Activated naive CD4-positive, alpha-beta T cell treated with anti-CD3 and anti-CD28 coated beads for 36 hours (primary cell): ENCODE measurements at regions of chr19 and their contacts with region 1.

Region 1: DNA sequence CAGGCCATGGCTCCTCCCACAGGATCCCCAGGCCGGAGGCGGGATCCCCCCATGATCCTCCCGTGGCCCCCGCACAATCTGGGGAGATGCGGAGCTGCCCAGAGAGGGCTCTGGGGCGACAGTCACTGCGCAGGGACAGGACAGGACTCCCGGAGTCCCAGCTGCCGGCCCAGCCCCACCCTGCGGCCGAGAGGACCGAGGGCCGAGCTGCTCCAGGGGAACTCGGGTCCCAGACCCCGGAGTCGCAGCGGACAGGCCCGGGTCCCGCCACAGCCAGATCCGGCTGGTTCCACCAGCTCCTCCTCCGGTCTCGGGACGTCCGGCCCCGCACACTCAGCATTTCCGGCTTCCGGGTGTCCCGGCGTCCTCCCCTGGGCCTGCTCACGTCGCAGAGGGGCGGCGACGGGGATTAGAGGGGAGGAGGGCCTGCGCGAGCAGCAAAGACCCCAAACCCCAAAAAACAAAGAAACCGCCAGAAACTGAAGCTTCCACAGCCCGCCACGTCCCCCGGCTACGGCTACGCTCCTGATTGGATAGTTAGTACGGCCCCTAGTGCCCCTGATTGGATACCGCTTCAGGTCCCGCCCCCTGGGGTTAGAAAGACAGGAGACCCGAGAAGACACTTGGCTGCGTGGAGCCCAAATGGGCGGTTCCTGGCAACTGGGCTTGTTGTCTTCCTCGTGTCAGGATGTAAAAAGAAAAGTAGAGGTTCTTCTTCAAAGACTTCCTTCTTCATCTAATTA is 21.3 kb upstream of the OR10H1 start:
- DNase-seq: peak; percentile 98
- H3K4me3 Mint-ChIP-seq: peak overlapping the region; percentile 88
- H3K27ac Mint-ChIP-seq: peak overlapping the region; percentile 96
- H3K4me1 Mint-ChIP-seq: peaks cover 13% of the 10 kb centered on the region
- H3K27me3 Mint-ChIP-seq: no peaks in the 10 kb centered on the region

Region 2: GRCh38 chr19:15125232-15126067 is 711.3 kb before region 1 on chr19:
- CTCF ChIA-PET with region 1: no interaction called
- intact Hi-C with region 1: loop called (anchors 10 kb)
- DNase-seq: peak; percentile 99
- H3K4me3 Mint-ChIP-seq: peak overlapping the region; percentile 88
- H3K27ac Mint-ChIP-seq: peak overlapping the region; percentile 94
- H3K4me1 Mint-ChIP-seq: peaks cover 31% of the 10 kb centered on the region
- H3K27me3 Mint-ChIP-seq: no peaks in the 10 kb centered on the region

Region 3: DNA sequence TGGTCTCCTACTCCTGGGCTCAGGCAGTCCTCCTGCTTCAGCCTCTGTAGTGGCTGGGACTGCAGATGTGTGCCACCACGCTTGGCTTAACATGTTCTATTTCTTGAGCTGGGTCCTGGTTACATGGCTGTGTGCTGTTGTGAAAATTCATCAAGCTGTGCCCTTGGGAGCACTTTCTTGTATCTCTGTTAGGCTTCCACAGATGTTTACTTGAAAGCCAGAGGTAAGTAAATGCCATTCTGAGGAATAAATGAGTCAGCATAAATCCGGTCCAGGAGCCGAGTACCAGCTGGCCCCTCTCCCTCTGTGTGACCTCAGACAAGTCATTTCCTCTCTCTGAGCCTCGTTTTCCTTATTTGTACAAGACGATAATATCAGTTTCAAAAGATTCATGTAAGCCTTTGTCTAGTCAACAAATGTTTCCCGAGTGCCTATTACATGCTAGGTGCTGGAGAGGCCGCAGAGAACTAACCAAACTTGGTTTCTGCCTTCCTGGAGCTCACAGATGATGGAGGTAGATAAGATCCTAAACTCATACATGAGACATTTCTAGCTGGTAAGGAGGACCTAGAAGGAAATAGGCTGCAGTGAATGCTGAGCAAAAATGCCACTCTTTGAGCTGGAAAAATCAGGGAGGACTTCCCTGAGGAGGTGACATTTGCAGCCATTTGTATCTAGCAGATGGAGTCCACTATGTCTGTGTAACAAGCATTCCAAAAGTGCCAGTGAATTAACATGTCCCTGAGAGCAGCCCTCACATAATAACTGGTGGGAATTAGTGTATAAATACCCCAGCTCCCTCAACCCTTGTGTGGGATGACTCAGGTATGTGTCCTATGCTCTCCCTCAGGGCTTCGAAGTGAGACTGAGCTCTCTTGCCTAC is 369.7 kb before region 1 on chr19:
- CTCF ChIA-PET with region 1: no interaction called
- intact Hi-C with region 1: loop called (anchors 2 kb)
- DNase-seq: peak; percentile 85
- H3K4me3 Mint-ChIP-seq: peak overlapping the region; percentile 34
- H3K27ac Mint-ChIP-seq: peak overlapping the region; percentile 93
- H3K4me1 Mint-ChIP-seq: peaks cover 56% of the 10 kb centered on the region
- H3K27me3 Mint-ChIP-seq: peaks cover 3% of the 10 kb centered on the region

Region 4: DNA sequence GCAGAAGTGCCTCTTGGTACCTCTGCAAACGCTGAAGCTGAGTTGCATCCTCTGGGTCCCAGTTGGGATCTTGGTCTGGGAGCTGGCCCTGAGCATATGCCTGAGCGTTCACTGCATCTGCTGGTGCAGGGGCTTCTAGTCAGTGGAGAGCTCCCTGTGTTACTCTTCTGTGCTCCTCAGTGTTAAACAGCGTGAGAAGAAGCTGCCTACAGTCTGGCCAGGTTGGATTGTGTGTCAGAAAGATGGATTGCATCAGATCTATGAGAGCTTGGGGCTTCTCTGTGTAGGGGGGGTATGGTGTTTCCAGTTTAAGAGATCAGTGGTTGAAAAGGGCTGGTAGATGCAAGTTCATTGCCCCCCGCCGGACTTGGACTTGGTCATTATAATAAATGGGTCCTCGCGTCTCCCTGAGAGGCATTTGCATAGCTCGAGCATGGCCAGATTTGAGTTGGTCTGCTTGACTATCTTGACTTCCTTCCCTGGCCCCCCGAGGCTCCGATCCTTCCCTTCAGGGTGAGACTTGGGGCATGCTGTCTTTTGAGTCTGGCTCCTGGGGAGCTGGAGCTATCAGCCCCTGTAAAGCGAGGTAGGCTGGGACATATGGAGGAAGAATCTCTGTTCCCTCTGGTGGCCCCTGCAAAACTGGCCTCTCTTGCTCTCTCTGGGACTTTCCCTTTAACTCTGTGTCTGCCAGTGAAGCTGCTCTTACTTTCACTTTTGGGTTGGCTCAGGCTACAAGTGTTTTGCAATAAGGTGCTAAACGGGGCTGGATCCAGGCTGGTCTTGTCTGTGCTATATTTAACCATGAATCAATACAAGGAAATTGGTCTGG is 164.9 kb after region 1 on chr19:
- CTCF ChIA-PET with region 1: no interaction called
- intact Hi-C with region 1: no loop called
- DNase-seq: peak; percentile 69
- H3K4me3 Mint-ChIP-seq: peak overlapping the region; percentile 65
- H3K27ac Mint-ChIP-seq: peak overlapping the region; percentile 70
- H3K4me1 Mint-ChIP-seq: peaks cover 27% of the 10 kb centered on the region
- H3K27me3 Mint-ChIP-seq: no peaks in the 10 kb centered on the region

Region 5: DNA sequence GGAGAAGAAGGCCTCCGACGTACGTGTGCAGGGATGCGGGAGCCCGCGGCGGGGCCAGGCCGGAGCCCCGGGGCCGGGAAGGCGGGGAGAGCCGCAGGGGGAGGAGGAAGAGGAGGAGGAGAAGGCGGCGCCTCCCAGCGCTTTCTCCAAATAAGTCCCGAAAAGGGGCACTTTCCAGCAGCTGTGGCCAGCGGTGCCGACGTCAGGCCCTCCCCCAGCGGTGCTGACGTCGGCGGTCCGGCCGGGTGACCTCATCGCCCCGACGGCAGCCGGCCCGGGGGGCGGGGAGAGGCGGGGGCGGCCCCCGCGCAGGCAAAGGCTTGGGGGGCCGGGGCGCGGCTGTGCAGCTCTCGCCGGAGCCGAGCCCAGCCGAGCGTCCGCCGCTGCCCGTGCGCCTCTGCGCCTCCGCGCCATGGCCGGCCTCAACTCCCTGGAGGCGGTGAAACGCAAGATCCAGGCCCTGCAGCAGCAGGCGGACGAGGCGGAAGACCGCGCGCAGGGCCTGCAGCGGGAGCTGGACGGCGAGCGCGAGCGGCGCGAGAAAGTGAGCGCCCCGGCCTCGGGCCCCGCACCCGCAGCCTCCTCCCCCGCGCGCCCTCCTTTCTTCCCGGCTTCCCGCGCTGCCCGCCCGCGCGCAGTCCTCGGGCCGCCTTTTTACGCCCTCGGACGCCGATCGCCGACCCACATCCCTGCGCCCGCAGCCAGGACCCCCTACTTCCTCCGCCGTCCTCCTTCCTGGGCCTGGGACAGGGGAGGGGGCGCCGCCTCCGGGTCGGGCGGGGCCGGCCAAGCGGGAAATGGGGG is 239.6 kb after region 1 on chr19 and contains the start of gene TPM4:
- CTCF ChIA-PET with region 1: no interaction called
- intact Hi-C with region 1: loop called (anchors 2 kb)
- DNase-seq: peak; percentile 93
- H3K4me3 Mint-ChIP-seq: peak within 1 kb of the TSS; percentile 81
- H3K27ac Mint-ChIP-seq: peak within 1 kb of the TSS; percentile 98
- H3K4me1 Mint-ChIP-seq: peaks cover 65% of the 10 kb centered on the region
- H3K27me3 Mint-ChIP-seq: no peaks in the 10 kb centered on the region
- total RNA-seq, gene TPM4: 240 to 254 TPM

Region 6: DNA sequence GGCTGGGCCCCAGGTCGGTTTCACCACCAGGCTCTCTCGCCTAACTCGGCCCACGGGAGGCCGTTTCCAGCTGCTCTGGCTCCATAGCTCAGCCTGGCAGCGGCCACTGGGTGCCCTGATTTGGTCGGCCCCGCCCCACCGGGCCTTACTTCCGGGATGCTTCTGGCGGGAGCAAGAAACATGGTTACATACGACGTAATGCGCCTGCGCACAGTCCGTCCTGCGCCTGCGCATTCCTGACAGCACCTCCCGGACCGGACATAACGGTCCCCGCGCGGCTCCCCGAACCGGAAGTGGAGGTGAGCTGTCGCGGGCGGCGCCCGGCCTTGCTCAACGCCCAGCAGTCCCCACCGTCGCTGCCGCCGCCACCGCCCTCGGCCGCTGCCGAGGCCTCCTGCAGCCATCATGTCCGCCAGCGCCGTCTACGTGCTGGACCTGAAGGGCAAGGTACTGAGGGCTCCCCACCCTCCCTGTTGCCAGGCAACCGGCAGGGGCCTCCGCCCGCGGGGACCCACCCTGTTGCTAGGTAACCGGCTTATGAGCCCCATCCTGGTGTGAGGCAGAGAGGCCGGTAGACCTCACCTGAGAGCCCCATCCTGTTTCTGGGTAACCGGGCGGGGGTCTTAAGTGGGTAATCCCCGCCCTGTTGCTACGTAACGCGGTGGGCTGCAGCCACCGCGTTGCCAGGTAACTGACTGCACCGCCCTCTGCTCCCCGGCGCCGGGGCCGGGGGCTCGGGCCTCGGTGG is 361.0 kb after region 1 on chr19 and contains the start of gene AP1M1:
- CTCF ChIA-PET with region 1: no interaction called
- intact Hi-C with region 1: loop called (anchors 5 kb)
- DNase-seq: peak; percentile 99
- H3K4me3 Mint-ChIP-seq: peak within 1 kb of the TSS; percentile 93
- H3K27ac Mint-ChIP-seq: peak within 1 kb of the TSS; percentile 93
- H3K4me1 Mint-ChIP-seq: peaks cover 37% of the 10 kb centered on the region
- H3K27me3 Mint-ChIP-seq: no peaks in the 10 kb centered on the region
- total RNA-seq, gene AP1M1: 113 to 123 TPM

Region 7: GRCh38 chr19:16330368-16330801 is 493.6 kb after region 1 on chr19:
- CTCF ChIA-PET with region 1: no interaction called
- intact Hi-C with region 1: loop called (anchors 10 kb)
- DNase-seq: peak; percentile 97
- H3K4me3 Mint-ChIP-seq: peak overlapping the region; percentile 24
- H3K27ac Mint-ChIP-seq: peak overlapping the region; percentile 72
- H3K4me1 Mint-ChIP-seq: peaks cover 64% of the 10 kb centered on the region
- H3K27me3 Mint-ChIP-seq: peaks cover 14% of the 10 kb centered on the region